ENCODE measurements at regions of chr7 and their contacts with region 1.

Region 1: DNA sequence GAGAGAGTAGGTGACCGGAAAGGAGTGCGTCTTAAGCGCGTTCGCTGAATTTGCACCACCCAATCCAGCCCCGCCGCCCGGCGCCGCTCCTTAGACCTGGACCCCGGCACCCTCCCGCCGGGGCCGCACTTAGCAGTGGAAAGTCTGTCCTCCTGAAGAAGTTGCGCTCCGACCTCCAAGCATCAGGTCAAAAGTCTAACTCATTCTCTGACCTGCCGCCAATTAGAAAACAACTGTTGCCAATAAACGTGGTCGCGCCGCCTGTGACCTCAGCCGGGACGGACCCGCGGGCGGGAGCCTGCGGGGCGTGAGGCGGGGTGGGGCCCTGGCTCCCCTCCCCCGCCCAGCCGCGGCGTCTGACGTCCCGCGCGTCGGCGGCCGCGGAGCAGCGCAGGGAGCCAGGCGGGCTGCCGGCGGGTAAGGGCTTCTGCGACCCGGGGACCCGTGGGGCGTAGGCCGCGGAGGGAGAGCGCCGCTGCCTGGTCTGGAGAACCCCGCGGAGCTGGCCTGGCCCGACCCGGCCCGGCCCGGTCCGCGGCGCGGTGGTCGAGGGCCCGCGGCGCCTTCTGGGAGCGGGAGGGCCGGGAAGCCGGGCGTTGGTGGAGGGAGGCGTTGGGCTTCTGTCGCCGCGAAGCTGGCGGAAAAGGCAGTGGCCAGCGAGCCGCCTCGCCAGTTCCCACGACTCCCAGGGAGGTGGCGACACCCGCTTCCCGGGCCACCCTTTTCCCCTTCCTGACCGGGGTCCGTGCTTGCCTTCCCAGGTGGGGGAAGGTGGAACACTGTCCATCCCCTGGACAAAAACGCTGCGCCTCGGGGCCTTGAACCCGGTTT is at the start of gene BCAP29:
- DNase-seq: peak; percentile 81
- ATAC-seq: peak; percentile 98
- H3K4me3 Mint-ChIP-seq: peak within 1 kb of the TSS; percentile 95
- H3K27ac Mint-ChIP-seq: peak within 1 kb of the TSS; percentile 90
- H3K4me1 Mint-ChIP-seq: peaks cover 23% of the 10 kb centered on the region
- H3K27me3 Mint-ChIP-seq: no peaks in the 10 kb centered on the region
- CTCF ChIP-seq: no peak
- total RNA-seq, gene BCAP29: 23.9 and 24.9 TPM in 2 replicates

Region 2: GRCh38 chr7:107563775-107564552 is 16.1 kb before region 1 on chr7 and contains the starts of genes COG5 and DUS4L:
- CTCF ChIA-PET with region 1: interaction called, 4 read pairs
- POLR2A ChIA-PET with region 1: interaction called, 16 read pairs
- intact Hi-C with region 1: loop called (anchors 1 kb)
- DNase-seq: peak; percentile 83
- ATAC-seq: peak; percentile 93
- H3K4me3 Mint-ChIP-seq: peak within 1 kb of the TSS; percentile 93
- H3K27ac Mint-ChIP-seq: peak within 1 kb of the TSS; percentile 82
- H3K4me1 Mint-ChIP-seq: peaks cover 43% of the 10 kb centered on the region
- H3K27me3 Mint-ChIP-seq: no peaks in the 10 kb centered on the region
- CTCF ChIP-seq: no peak
- total RNA-seq, gene COG5: 40.6 and 47.0 TPM in 2 replicates
- total RNA-seq, gene DUS4L: 11.0 and 14.6 TPM in 2 replicates

Region 3: DNA sequence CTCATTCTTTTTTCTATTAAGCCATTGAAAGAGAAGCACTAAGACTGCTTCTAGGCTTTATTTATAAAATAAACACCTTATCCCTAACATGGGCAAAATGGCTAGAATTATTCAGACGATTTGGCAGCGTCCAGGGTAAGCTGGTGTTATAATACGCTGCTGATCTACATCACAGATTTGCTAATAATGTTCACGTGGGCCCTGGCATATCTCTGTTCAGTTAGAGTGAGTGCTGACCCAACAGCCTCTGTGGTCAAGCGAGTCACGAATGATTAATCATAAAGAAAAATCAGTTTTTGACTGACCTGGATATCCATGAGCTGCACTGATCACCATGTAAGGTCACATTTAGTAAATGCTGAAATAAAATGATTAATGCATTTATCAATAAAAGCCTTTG is 135.4 kb after region 1 on chr7:
- CTCF ChIA-PET with region 1: no interaction called
- POLR2A ChIA-PET with region 1: no interaction called
- intact Hi-C with region 1: no loop called
- DNase-seq: no peak
- ATAC-seq: no peak
- H3K4me3 Mint-ChIP-seq: no peak overlapping the region
- H3K27ac Mint-ChIP-seq: no peak overlapping the region
- H3K4me1 Mint-ChIP-seq: no peaks in the 10 kb centered on the region
- H3K27me3 Mint-ChIP-seq: no peaks in the 10 kb centered on the region
- CTCF ChIP-seq: no peak

Measured in activated B cell treated with CpG ODN at 0.5 μM for 24 hours (primary cell).